HEK293 (cell line): ENCODE measurements at regions of chr9 and their contacts with region 1.

Region 1: GRCh38 chr9:2307480-2307879 is 292.3 kb downstream of the SMARCA2 start:
- H3K4me3 ChIP-seq: no peak overlapping the region
- H3K27ac ChIP-seq: no peak overlapping the region
- H3K4me1 ChIP-seq: no peaks in the 10 kb centered on the region
- CTCF ChIP-seq: no peak

Region 2: GRCh38 chr9:2281031-2281802 is 26.3 kb before region 1 on chr9:
- CTCF ChIA-PET with region 1: no interaction called
- POLR2A ChIA-PET with region 1: interaction called, 10 read pairs
- H3K4me3 ChIP-seq: no peak overlapping the region
- H3K27ac ChIP-seq: no peak overlapping the region
- H3K4me1 ChIP-seq: peaks cover 9% of the 10 kb centered on the region; the same call in 1 of the 2 replicates
- CTCF ChIP-seq: no peak

Region 3: GRCh38 chr9:2418619-2419018 is 111.1 kb after region 1 on chr9:
- CTCF ChIA-PET with region 1: no interaction called
- POLR2A ChIA-PET with region 1: no interaction called
- H3K4me3 ChIP-seq: no peak overlapping the region
- H3K27ac ChIP-seq: no peak overlapping the region
- H3K4me1 ChIP-seq: peaks cover 12% of the 10 kb centered on the region
- CTCF ChIP-seq: no peak

Region 4: DNA sequence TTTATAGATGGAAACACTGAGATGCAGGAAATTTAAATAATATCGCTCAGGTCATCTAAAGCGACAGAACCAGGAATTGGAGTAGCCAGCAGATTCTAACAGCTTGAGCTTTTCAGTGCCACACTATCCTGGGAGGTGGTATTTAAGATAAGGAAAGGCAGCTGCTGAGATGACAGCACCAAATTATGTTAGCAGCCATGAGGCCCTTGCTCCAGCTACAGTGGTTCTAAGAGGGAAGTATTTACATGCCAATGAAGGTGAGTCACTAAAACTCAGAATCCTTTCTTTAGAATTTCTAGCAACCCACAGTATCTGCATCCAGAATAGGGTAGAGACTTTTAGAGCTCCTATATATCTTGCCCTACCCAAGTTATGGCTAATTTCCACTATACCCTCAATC is 187.1 kb after region 1 on chr9:
- CTCF ChIA-PET with region 1: no interaction called
- POLR2A ChIA-PET with region 1: no interaction called
- H3K4me3 ChIP-seq: no peak overlapping the region
- H3K27ac ChIP-seq: no peak overlapping the region
- H3K4me1 ChIP-seq: peaks cover 5% of the 10 kb centered on the region; the same call in 1 of the 2 replicates
- CTCF ChIP-seq: no peak

Region 5: GRCh38 chr9:2583308-2584013 is 276.0 kb after region 1 on chr9:
- CTCF ChIA-PET with region 1: no interaction called
- POLR2A ChIA-PET with region 1: no interaction called
- H3K4me3 ChIP-seq: no peak overlapping the region
- H3K27ac ChIP-seq: no peak overlapping the region
- H3K4me1 ChIP-seq: no peaks in the 10 kb centered on the region
- CTCF ChIP-seq: no peak